ENCODE measurements at regions of chr1 and their contacts with region 1.

Region 1: DNA sequence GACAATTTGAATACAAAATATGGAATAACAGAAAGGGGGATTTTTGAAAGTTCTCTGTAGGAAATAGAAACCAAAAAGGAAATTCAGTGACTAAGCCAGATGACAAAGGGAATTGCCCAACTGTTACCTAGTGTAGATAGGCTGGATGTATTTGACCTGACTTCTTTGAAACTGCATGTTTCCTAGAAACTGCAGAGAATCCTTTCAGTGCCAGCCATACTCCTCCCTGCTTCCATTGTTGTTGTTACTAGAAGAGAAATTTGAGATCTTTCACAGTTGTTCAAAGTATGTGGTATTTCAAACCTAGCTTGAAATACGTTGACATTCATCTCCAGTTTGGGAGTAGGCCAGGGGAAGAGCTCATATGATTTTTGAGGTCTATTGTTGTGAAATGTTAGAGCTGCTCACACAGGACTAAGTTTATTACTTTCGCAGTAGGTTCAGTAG is 1.8 kb upstream of the GBP5 start:
- DNase-seq: peak; percentile 85
- H3K4me3 Mint-ChIP-seq: peak overlapping the region; percentile 99
- H3K27ac Mint-ChIP-seq: peak overlapping the region; percentile 96
- H3K4me1 Mint-ChIP-seq: peaks cover 64% of the 10 kb centered on the region
- H3K27me3 Mint-ChIP-seq: no peaks in the 10 kb centered on the region

Region 2: DNA sequence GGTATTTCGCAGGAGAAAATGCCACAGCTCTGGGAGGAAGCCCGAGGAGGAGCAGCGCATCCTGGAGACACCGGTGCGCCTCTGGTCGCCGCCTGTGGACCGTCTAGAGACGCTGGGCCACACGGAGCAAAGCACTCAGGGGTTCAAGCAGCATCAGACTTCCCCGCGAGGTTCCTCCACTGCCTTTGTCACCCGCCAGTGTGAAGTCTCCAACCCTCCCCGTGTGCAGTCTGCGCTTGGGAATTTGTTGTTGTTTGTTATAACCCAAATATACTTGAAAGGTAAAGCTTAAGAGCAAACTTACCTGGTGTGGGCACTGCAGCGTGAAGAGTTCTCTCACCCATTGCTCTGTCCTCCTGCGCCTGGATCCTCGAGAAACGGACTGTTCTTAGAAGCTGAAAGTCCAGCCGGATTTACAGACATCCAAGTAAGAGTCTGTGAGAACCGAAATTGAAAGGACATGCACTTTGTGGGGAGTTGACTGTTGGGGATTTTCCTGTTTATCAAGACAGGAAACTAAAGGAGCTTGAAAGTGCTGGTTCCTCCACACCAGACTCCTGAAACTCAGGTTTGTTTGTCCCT is 75.9 kb before region 1 on chr1 and contains the start of gene GBP4:
- intact Hi-C with region 1: loop called (anchors 1 kb)
- DNase-seq: peak; percentile 87
- H3K4me3 Mint-ChIP-seq: peak within 1 kb of the TSS; percentile 91
- H3K27ac Mint-ChIP-seq: peak within 1 kb of the TSS; percentile 96
- H3K4me1 Mint-ChIP-seq: peaks cover 67% of the 10 kb centered on the region
- H3K27me3 Mint-ChIP-seq: no peaks in the 10 kb centered on the region
- total RNA-seq, gene GBP4: 29.5 and 33.5 TPM in 2 replicates

Region 3: GRCh38 chr1:89286549-89287180 is 12.2 kb after region 1 on chr1:
- intact Hi-C with region 1: loop called (anchors 1 kb)
- DNase-seq: peak; percentile 81
- H3K4me3 Mint-ChIP-seq: peak overlapping the region; percentile 72
- H3K27ac Mint-ChIP-seq: peak overlapping the region; percentile 90
- H3K4me1 Mint-ChIP-seq: peaks cover 67% of the 10 kb centered on the region
- H3K27me3 Mint-ChIP-seq: no peaks in the 10 kb centered on the region

Region 4: GRCh38 chr1:89310505-89310904 is 36.1 kb after region 1 on chr1:
- intact Hi-C with region 1: loop called (anchors 1 kb)
- DNase-seq: peak; percentile 64
- H3K4me3 Mint-ChIP-seq: peak overlapping the region; percentile 70
- H3K27ac Mint-ChIP-seq: peak overlapping the region; percentile 92
- H3K4me1 Mint-ChIP-seq: peaks cover 46% of the 10 kb centered on the region
- H3K27me3 Mint-ChIP-seq: no peaks in the 10 kb centered on the region

Measured in activated CD4-positive, alpha-beta T cell treated with anti-CD3 and anti-CD28 coated beads, Interleukin-2, amount 10 ng/mL, durations not matched to agents 24 days and 14 days (primary cell).